ENCODE measurements at regions of chr17 and their contacts with region 1.

Region 1: DNA sequence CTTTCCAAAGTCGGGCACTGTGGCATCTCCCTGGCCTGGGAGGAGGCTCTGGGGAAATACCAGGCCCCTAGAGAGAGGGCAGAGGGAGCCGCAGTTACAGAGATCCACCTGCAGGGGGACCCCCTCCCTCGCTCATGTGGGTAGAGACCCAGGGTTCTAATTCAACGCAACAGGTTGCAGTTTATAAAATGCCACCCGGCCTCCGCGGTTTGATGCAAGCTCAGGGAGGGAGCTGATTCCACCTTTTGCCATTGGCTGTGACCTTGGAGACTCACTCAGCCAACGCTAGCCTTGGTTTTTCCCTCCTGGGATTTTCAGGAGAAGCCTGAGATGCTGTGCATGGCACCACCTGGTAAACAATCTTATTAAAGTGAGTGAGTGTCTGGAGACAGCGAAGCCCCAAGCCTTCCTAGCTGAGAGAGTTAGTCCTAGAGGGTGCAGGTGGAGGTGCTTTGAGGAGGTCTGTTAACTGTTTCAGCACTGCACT is 12.1 kb downstream of the TTLL6 start:
- DNase-seq: no peak
- H3K4me3 ChIP-seq: no peak overlapping the region
- H3K27ac ChIP-seq: no peak overlapping the region
- H3K27me3 ChIP-seq: peaks cover 12% of the 10 kb centered on the region
- CTCF ChIP-seq: peak; percentile 95

Region 2: DNA sequence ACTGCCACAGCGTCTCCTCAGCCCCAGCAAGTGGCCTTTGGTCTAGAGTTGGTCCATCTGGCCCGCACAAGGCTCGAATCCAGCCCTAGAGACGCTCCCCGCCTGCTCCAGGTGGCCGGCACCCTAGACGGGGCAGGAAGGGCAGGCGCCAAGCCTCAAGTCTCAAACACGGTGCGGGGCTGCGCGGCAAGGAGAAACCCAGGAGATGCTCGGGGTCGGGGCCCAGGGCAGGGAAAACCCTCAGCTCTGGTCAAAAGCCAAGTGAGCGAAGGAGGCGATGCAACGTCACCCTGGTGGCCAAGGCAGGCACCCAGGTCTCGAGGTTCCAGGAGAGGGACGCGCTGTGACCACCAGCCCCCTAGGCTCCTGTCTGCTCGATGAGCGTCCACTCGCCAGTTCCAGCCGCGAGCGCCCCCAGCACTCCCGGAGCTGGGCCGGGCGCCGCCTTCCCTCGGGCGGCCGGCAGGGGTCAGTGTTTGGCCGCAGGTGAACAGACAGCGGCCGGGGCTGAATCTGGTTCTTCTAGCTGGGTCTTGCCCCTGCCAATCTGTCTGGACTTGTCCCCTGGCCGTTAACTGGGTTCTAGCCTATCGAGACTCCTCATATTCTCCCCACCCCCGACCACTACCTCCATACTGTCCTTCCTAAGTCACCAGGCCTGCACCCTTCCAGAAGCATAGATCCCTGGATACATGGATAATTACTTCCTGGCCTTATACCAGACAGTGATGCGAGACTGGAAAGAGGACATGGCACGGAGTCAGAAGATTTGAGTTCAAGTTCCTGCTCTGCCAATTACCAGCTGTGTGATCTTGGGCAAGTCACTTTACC is 126.6 kb before region 1 on chr17:
- CTCF ChIA-PET with region 1: interaction called, 10 read pairs
- POLR2A ChIA-PET with region 1: no interaction called
- DNase-seq: no peak
- H3K4me3 ChIP-seq: no peak overlapping the region
- H3K27ac ChIP-seq: no peak overlapping the region
- H3K27me3 ChIP-seq: peaks cover 25% of the 10 kb centered on the region
- CTCF ChIP-seq: peak; percentile 84

Region 3: GRCh38 chr17:48791128-48792032 is 13.6 kb before region 1 on chr17:
- CTCF ChIA-PET with region 1: interaction called, 10 read pairs
- POLR2A ChIA-PET with region 1: interaction called, 3 read pairs
- DNase-seq: peak; percentile 55
- H3K4me3 ChIP-seq: no peak overlapping the region
- H3K27ac ChIP-seq: no peak overlapping the region
- H3K27me3 ChIP-seq: peaks cover 42% of the 10 kb centered on the region
- CTCF ChIP-seq: peak; percentile 91

Region 4: GRCh38 chr17:48816774-48817590 is 12.0 kb after region 1 on chr17 and contains the start of gene TTLL6:
- CTCF ChIA-PET with region 1: interaction called, 42 read pairs
- POLR2A ChIA-PET with region 1: no interaction called
- DNase-seq: peak; percentile 18
- H3K4me3 ChIP-seq: peak within 1 kb of the TSS; percentile 50
- H3K27ac ChIP-seq: peak within 1 kb of the TSS; percentile 39
- H3K27me3 ChIP-seq: peaks cover 33% of the 10 kb centered on the region
- CTCF ChIP-seq: no peak
- polyA plus RNA-seq, gene TTLL6: 0.04 and 0.06 TPM in 2 replicates

Region 5: GRCh38 chr17:48825446-48826381 is 20.7 kb after region 1 on chr17:
- CTCF ChIA-PET with region 1: interaction called, 13 read pairs
- POLR2A ChIA-PET with region 1: interaction called, 3 read pairs
- DNase-seq: no peak
- H3K4me3 ChIP-seq: no peak overlapping the region
- H3K27ac ChIP-seq: no peak overlapping the region
- H3K27me3 ChIP-seq: no peaks in the 10 kb centered on the region
- CTCF ChIP-seq: no peak

Region 6: GRCh38 chr17:48871551-48872351 is 66.8 kb after region 1 on chr17:
- CTCF ChIA-PET with region 1: interaction called, 164 read pairs
- POLR2A ChIA-PET with region 1: interaction called, 5 read pairs
- DNase-seq: no peak
- H3K4me3 ChIP-seq: no peak overlapping the region
- H3K27ac ChIP-seq: no peak overlapping the region
- H3K27me3 ChIP-seq: peaks cover 9% of the 10 kb centered on the region
- CTCF ChIP-seq: no peak